GM10248 (cell line): ENCODE measurements at regions of chr1 and their contacts with region 1.

Region 1: DNA sequence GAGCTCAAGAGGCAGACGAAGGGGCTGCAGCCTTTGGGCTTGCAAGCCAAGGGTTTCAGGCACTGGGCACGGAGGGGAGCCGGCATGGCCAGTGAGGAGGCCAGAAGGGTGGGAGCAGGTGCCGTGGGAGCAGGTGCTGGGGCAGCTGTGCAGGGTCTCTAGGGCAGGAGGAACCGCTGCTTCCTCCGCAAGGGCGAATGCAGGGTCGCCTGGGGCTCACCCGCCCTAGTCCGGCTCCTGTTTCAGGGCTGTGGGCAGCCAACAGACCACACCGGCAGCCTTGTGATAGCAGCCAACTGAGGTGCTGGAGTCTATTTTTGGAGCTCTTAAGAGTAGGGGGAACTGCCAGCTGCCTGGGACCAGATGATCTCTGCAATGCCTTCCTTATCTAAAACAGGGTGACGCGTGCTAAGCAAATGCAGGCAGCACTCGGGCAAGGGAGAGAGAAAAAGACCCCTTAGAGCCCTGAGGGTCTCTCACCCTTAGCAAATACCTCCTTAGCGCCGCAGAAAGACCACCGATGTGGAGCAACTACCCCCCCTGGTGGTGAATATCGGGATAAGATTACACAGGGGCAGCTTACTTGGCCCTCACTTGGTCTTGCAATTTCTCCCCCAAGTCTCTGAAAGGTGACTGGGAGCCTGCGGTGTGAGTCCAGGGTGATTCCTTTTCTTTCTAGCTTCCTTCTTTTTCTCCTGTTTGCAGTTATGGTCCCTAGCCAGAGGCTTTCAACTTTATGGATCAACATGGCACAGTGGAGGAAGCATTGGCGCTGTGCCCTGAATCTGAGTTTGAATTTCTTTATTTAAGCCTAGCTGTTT is 20.7 kb upstream of the MAPKAPK2 start:
- DNase-seq: peak; percentile 78
- CTCF ChIP-seq: peak; percentile 66

Region 2: DNA sequence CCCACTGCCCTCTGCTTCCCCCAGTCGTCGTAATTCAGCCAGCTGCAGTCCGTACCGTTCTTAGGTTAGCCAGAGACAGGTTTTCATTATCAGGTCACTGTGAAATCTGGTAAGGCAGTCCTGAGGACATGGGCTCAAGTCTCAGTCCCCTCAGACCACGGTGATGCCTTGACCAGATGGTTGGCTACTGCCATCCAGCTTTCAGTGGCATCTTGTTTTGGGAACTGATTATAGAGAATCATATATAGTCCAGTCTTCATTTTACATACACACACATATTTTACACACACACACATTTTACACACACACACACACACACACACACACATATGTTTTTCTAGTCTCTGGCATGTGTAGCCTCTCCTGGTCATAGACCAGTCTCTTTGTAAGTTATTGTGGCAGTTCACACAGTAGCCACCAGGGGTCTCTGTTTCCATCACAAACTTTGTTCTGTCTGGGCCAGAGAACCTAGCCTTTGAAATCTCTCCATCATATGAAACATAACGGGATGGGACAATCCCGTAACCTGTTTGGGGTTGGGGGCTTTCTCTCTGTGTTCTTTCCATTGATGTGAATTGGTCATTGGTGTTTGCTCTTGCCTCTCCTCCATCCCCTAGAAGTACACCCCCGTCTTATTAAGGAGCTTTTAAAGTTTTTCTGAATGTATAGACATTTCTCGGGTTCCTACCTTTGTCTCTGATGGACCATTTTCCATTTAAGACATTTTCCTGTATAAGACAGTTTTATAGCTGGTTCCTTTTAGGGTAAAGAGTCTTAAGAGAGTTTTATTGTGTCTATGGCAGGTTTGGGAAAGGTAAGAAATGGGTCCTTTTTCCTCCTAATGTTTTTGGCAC is 202.2 kb before region 1 on chr1:
- CTCF ChIA-PET with region 1: interaction called, 21 read pairs
- POLR2A ChIA-PET with region 1: no interaction called
- DNase-seq: peak; percentile 79
- CTCF ChIP-seq: peak; percentile 81

Region 3: DNA sequence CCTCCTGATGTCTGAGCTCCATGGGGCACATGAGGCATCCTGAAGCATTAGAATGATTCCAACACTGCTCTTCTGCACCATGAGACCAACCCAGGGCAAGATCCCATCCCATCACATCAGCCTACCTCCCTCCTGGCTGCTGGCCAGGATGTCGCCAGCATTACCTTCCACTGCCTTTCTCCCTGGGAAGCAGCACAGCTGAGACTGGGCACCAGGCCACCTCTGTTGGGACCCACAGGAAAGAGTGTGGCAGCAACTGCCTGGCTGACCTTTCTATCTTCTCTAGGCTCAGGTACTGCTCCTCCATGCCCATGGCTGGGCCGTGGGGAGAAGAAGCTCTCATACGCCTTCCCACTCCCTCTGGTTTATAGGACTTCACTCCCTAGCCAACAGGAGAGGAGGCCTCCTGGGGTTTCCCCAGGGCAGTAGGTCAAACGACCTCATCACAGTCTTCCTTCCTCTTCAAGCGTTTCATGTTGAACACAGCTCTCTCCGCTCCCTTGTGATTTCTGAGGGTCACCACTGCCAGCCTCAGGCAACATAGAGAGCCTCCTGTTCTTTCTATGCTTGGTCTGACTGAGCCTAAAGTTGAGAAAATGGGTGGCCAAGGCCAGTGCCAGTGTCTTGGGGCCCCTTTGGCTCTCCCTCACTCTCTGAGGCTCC is 167.8 kb before region 1 on chr1:
- CTCF ChIA-PET with region 1: interaction called, 35 read pairs
- POLR2A ChIA-PET with region 1: no interaction called
- DNase-seq: peak; percentile 75
- CTCF ChIP-seq: no peak

Region 4: GRCh38 chr1:206606856-206607255 is 57.2 kb before region 1 on chr1:
- CTCF ChIA-PET with region 1: interaction called, 139 read pairs
- POLR2A ChIA-PET with region 1: no interaction called
- DNase-seq: no peak
- CTCF ChIP-seq: peak; percentile 27

Region 5: DNA sequence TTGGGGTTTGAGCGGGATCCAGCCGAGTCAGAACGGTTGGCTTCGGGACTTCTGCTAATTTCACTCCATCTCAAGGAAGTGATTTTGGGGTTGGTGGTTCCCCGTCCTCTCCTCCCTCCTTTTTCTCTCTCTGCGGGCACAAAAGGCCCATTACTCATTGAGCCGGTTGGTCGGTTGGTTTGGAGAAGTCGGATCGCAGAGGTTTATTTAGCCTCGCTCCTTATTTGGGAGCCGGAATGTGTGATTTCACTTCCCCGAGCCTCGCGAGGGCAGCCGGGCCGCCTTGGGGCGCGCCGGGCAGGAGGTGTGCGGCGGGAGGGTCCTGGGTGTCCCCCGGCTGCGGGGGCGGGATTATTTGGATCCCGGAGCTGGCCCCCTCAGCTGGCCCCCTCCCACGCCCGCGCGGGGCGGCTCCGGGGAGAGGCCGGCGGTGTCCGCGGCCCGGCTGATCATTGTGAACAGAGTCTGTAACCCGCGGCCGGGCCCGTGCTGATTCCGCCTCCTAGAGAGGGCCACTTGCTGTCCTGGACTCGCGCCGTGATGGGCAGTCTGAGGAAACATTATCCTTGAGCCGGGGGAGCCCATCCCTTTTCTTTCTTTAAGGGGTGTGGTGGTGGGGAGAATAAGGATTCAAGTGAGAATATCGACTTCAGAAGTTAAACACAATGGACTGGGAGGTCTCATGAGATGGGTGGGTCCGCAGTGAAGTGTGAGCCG is 21.9 kb after region 1 on chr1:
- CTCF ChIA-PET with region 1: interaction called, 637 read pairs
- POLR2A ChIA-PET with region 1: no interaction called
- DNase-seq: peak; percentile 63
- CTCF ChIP-seq: no peak

Region 6: GRCh38 chr1:206725109-206725963 is 61.3 kb after region 1 on chr1:
- CTCF ChIA-PET with region 1: interaction called, 16 read pairs
- POLR2A ChIA-PET with region 1: no interaction called
- DNase-seq: peak; percentile 71
- CTCF ChIP-seq: peak; percentile 75

Region 7: GRCh38 chr1:206745301-206745700 is 81.3 kb after region 1 on chr1:
- CTCF ChIA-PET with region 1: no interaction called
- POLR2A ChIA-PET with region 1: no interaction called
- DNase-seq: no peak
- CTCF ChIP-seq: no peak

Region 8: GRCh38 chr1:206982216-206982615 is 318.2 kb after region 1 on chr1:
- CTCF ChIA-PET with region 1: interaction called, 17 read pairs
- POLR2A ChIA-PET with region 1: no interaction called
- DNase-seq: peak; percentile 77
- CTCF ChIP-seq: peak; percentile 85